ENCODE measurements at regions of chr1 and their contacts with region 1.

Region 1: DNA sequence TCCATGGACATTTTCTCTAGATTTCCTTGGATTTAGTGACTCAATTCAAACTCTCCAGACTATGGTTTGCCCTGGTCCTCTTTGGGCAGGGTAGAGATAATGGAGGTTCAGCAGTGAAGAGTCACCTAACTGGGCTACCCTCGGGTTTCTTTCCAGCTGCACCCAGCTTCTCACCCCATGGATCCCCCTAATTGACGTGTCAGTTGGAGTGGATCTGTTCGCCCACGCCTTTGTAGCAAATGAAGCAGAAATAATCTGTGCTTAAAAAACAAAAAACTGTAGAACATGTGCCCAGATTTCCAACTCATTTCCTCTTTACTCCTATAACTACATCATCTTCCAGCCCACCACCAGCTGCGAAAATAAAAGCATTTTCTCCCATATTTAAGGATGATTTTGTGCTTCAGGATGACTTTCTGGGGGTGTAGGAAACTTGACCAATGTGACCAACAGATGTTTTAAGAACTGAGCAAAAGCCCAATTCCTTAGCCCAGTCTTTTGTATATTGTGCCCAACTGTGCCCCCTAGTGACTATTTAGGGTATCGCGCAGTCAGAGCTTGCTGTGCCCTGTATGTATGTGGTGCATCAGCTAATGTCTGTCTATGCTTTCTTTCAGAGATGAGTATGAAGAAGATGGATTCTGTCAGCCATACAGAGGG is 66.5 kb upstream of the UBE2U start:
- H3K4me3 Mint-ChIP-seq: no peak overlapping the region
- H3K27ac Mint-ChIP-seq: no peak overlapping the region
- H3K4me1 Mint-ChIP-seq: no peaks in the 10 kb centered on the region
- H3K27me3 Mint-ChIP-seq: peaks cover 3% of the 10 kb centered on the region

Region 2: DNA sequence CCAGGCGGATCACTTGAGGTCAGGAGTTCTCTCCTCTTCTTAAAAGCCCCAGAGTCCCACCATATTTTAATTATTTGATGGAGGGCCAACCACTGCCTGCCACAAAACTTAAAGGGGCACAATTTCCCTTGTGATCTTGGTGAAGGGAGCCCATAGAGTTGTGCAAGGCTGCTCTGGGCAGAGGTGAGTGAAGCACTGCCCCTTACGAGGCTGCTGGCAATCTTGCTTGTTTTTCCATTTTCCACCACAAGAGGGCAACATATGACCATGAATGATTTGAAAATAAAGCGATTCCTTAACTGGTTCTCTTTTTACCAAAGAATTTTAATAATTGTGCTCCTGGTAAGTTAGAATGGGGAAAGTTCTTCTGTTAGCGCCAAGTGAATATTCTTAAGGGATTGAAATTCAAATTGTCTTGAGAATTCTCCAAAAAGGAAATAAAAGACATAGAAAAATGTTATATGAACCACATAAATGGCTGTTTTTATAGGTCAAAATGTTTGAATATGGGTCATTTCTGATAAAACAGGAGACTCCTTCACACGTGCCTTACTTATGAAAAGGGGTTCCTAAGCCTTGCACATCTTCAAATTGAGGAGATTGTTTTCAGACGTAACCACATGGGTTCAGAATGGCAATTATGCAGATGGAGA is 521.0 kb before region 1 on chr1:
- intact Hi-C with region 1: loop called (anchors 1 kb)
- H3K4me3 Mint-ChIP-seq: no peak overlapping the region
- H3K27ac Mint-ChIP-seq: no peak overlapping the region
- H3K4me1 Mint-ChIP-seq: peaks cover 10% of the 10 kb centered on the region
- H3K27me3 Mint-ChIP-seq: no peaks in the 10 kb centered on the region

Region 3: GRCh38 chr1:63691701-63692425 is 445.0 kb before region 1 on chr1:
- intact Hi-C with region 1: loop called (anchors 2 kb)
- H3K4me3 Mint-ChIP-seq: no peak overlapping the region
- H3K27ac Mint-ChIP-seq: no peak overlapping the region
- H3K4me1 Mint-ChIP-seq: no peaks in the 10 kb centered on the region
- H3K27me3 Mint-ChIP-seq: no peaks in the 10 kb centered on the region

Region 4: GRCh38 chr1:63955370-63956145 is 181.3 kb before region 1 on chr1:
- intact Hi-C with region 1: no loop called
- H3K4me3 Mint-ChIP-seq: no peak overlapping the region
- H3K27ac Mint-ChIP-seq: no peak overlapping the region
- H3K4me1 Mint-ChIP-seq: no peaks in the 10 kb centered on the region
- H3K27me3 Mint-ChIP-seq: no peaks in the 10 kb centered on the region

Region 5: DNA sequence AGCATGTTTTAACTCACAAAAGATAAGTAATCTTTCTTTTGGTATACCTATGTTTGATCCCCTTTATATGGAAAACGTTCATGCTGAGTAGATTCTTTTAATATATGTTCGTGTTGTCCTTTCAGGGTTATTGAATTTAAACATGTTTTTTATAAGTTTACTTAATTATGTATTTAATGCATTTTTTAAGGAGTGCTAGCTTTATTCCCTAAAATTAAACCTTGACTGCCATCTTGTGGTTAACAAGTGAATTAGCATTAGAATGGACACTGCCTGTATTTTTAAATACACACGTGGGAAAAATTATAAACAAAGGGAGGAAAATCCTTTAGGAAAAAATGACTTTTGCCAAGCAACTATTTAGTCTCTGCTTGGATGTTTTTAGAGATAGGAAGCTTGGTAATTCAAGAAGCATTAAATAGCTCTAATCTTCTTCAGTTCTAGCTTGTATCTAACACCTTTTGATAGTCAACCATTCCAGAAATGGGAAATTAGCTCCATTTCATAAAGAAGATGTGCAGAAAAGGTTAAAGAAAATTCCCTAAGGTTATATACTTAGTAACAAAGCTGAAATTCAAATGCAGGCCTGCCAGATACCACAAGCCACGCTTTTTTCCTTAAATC is 109.5 kb after region 1 on chr1:
- intact Hi-C with region 1: no loop called
- H3K4me3 Mint-ChIP-seq: no peak overlapping the region
- H3K27ac Mint-ChIP-seq: no peak overlapping the region
- H3K4me1 Mint-ChIP-seq: peaks cover 10% of the 10 kb centered on the region
- H3K27me3 Mint-ChIP-seq: peaks cover 11% of the 10 kb centered on the region

Measured in dendritic cell treated with granulocyte-macrophage colony-stimulating factor and Interleukin-4, amounts not matched to agents 40 ng/mL and 50 ng/mL, for 4 days (primary cell).